Caco-2 (cell line): ENCODE measurements at regions of chr19 and their contacts with region 1.

Region 1: GRCh38 chr19:38683393-38684080 is 36.1 kb downstream of the ACTN4 start:
- DNase-seq: peak; percentile 96 to 98
- H3K4me3 ChIP-seq: no peak overlapping the region
- H3K4me3 Mint-ChIP-seq: peak overlapping the region; percentile 57
- H3K27ac Mint-ChIP-seq: peak overlapping the region; percentile 95
- H3K4me1 ChIP-seq: peaks cover 70% of the 10 kb centered on the region
- H3K4me1 Mint-ChIP-seq: peaks cover 81% of the 10 kb centered on the region
- H3K27me3 ChIP-seq: no peaks in the 10 kb centered on the region
- H3K27me3 Mint-ChIP-seq: no peaks in the 10 kb centered on the region
- CTCF ChIP-seq: no peak

Region 2: DNA sequence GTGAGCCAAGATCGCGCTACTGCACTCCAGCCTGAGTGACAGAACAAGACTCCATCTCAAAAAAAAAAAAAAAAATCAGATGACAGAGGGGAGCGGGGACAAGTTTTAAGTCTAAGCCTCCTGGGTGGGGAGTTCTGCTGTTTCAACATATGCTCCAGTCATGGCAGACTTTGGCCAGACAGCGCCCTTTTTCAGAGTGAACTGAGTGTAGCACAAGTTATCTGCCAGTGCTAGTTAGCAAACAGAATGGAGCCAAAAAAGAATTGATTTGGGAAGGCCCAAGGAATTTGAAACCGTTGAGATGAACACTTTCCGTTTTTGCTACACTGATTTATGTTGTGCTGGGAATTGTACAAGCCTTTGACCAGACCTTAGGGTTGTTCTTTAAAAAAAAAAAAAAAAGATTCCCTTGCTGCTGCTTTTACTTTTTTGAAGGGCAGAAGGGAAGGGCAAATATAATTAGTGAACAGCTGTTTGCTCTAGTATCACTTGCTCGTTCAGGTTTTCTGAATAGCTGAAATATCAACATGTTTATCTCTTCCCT is 30.4 kb before region 1 on chr19:
- CTCF ChIA-PET with region 1: interaction called, 11 read pairs
- POLR2A ChIA-PET with region 1: interaction called, 25 read pairs
- intact Hi-C with region 1: no loop called
- DNase-seq: peak; percentile 73 to 81
- H3K4me3 ChIP-seq: no peak overlapping the region; the same call in 1 of the 2 replicates
- H3K4me3 Mint-ChIP-seq: peak overlapping the region; percentile 59
- H3K27ac Mint-ChIP-seq: peak overlapping the region; percentile 84
- H3K4me1 ChIP-seq: peaks cover 87% of the 10 kb centered on the region
- H3K4me1 Mint-ChIP-seq: peaks cover 62% of the 10 kb centered on the region
- H3K27me3 ChIP-seq: no peaks in the 10 kb centered on the region
- H3K27me3 Mint-ChIP-seq: no peaks in the 10 kb centered on the region
- CTCF ChIP-seq: no peak

Region 3: GRCh38 chr19:38658462-38659306 is 24.9 kb before region 1 on chr19:
- CTCF ChIA-PET with region 1: interaction called, 12 read pairs
- POLR2A ChIA-PET with region 1: interaction called, 19 read pairs
- intact Hi-C with region 1: loop called (anchors 1 kb)
- DNase-seq: peak; percentile 76 to 81
- H3K4me3 ChIP-seq: no peak overlapping the region
- H3K4me3 Mint-ChIP-seq: peak overlapping the region; percentile 62
- H3K27ac Mint-ChIP-seq: peak overlapping the region; percentile 98
- H3K4me1 ChIP-seq: peaks cover 100% of the 10 kb centered on the region
- H3K4me1 Mint-ChIP-seq: peaks cover 78% of the 10 kb centered on the region
- H3K27me3 ChIP-seq: no peaks in the 10 kb centered on the region
- H3K27me3 Mint-ChIP-seq: no peaks in the 10 kb centered on the region
- CTCF ChIP-seq: no peak

Region 4: DNA sequence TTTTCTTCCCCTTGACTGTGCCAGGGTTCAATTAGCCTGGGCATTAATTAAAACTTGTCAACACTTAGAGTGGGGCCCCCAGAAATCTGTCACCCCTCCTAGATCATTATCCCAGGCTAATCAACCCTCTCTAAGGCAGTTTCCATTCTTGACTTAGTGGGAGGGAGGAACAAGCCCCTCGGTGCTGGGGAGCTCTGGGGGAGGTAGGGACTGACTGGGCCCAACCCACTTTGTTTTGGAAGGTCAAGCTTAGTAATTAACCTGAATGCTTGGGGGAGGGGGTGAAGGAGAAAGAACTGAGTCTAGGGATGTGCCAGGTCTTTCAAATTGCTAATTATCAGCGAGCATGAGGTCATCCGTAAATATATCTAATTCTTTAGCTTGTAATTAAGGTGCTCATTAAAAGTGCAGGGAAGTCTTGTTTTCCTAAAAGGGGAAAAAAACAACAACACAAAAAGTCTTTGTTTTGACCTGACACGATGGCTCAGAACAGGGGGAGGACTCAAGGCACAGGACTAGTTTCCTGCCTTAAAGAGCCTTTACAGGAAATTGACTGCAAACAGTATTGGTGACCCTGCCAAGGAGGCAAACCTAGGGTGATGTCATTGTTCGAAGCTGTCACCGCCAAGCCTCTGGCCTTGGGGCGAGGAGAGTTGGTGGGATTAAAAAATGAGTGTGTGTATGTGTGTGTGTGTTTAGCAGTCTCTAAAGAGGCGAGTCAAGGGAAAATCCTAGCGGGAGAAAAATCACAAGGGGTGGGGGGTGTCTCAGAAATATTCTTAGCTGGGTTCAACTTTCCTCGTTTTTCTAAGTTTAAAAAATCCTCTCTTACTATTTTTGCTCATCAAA is 16.6 kb before region 1 on chr19:
- CTCF ChIA-PET with region 1: interaction called, 12 read pairs
- POLR2A ChIA-PET with region 1: interaction called, 33 read pairs
- intact Hi-C with region 1: loop called (anchors 1 kb)
- DNase-seq: no peak
- H3K4me3 ChIP-seq: no peak overlapping the region
- H3K4me3 Mint-ChIP-seq: peak overlapping the region; percentile 69
- H3K27ac Mint-ChIP-seq: peak overlapping the region; percentile 88
- H3K4me1 ChIP-seq: peaks cover 100% of the 10 kb centered on the region
- H3K4me1 Mint-ChIP-seq: peaks cover 86% of the 10 kb centered on the region
- H3K27me3 ChIP-seq: no peaks in the 10 kb centered on the region
- H3K27me3 Mint-ChIP-seq: no peaks in the 10 kb centered on the region
- CTCF ChIP-seq: no peak

Region 5: GRCh38 chr19:38733436-38734175 is 50.1 kb after region 1 on chr19:
- CTCF ChIA-PET with region 1: no interaction called
- POLR2A ChIA-PET with region 1: no interaction called
- intact Hi-C with region 1: no loop called
- DNase-seq: no peak
- H3K4me3 ChIP-seq: no peak overlapping the region
- H3K4me3 Mint-ChIP-seq: no peak overlapping the region
- H3K27ac Mint-ChIP-seq: peak overlapping the region; percentile 88
- H3K4me1 ChIP-seq: peaks cover 24% of the 10 kb centered on the region
- H3K4me1 Mint-ChIP-seq: peaks cover 30% of the 10 kb centered on the region
- H3K27me3 ChIP-seq: no peaks in the 10 kb centered on the region
- H3K27me3 Mint-ChIP-seq: no peaks in the 10 kb centered on the region
- CTCF ChIP-seq: no peak

Region 6: DNA sequence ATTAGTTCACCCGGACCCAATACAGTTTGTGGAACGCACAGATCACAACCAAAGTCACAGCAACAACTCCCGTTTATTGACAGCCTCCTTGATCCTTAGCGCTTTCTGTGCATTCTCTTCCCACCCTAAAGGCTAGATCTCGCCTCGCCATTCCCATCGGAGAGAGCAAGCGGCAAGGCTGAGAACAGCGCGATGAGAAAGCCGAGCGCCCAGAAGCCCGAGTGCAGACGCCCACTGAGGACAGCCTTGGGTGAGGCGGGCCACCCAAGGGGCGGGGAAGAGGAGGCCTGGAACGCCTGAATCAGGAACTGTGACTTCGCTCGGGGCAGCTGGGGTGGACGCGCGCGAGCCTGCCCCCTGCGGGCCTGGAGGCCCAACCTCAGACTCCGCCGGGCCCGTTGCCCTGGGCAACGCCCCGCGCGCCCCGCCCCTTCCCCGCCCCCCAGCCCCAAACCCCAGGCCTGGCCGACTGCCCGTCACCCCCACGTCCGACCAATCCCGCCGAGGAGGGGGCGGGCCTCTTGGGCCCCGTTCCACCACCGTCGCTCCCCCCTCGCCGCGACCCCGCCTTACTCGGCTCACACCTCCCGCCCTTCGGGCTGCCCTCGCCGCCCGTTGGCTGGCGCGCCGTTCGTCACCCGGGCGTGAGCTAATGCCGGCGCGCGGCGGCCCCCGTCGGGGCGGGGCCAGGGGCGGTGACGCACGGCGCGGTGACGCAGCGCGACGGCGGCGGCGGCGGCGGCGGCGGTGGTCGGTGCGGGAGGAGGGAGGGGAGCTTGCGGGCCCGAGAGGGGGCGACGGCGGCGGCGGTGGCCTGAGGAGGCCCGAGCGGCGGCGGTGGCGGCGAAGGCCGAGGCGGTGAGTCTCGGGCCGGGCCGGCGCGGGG is 658.4 kb after region 1 on chr19 and contains the start of gene SAMD4B:
- CTCF ChIA-PET with region 1: no interaction called
- POLR2A ChIA-PET with region 1: no interaction called
- intact Hi-C with region 1: no loop called
- DNase-seq: peak; percentile 99 to 100
- H3K4me3 ChIP-seq: peak within 1 kb of the TSS; percentile 71
- H3K4me3 Mint-ChIP-seq: peak within 1 kb of the TSS; percentile 100
- H3K27ac Mint-ChIP-seq: peak within 1 kb of the TSS; percentile 95
- H3K4me1 ChIP-seq: peaks cover 7% of the 10 kb centered on the region
- H3K4me1 Mint-ChIP-seq: peaks cover 47% of the 10 kb centered on the region
- H3K27me3 ChIP-seq: no peaks in the 10 kb centered on the region
- H3K27me3 Mint-ChIP-seq: no peaks in the 10 kb centered on the region
- CTCF ChIP-seq: peak; percentile 68 to 79
- total RNA-seq, gene SAMD4B: 132 and 147 TPM in 2 replicates